HEK293 (cell line): ENCODE measurements at regions of chr1 and their contacts with region 1.

Region 1: GRCh38 chr1:237864338-237865244 is 26.1 kb downstream of the ZP4 start:
- H3K4me3 ChIP-seq: peak overlapping the region; percentile 14
- H3K27ac ChIP-seq: no peak overlapping the region
- H3K4me1 ChIP-seq: no peaks in the 10 kb centered on the region
- CTCF ChIP-seq: peak; percentile 93

Region 2: GRCh38 chr1:237705462-237705861 is 159.1 kb before region 1 on chr1:
- CTCF ChIA-PET with region 1: no interaction called
- POLR2A ChIA-PET with region 1: no interaction called
- H3K4me3 ChIP-seq: no peak overlapping the region
- H3K27ac ChIP-seq: no peak overlapping the region
- H3K4me1 ChIP-seq: no peaks in the 10 kb centered on the region
- CTCF ChIP-seq: no peak

Region 3: GRCh38 chr1:237814319-237814924 is 50.2 kb before region 1 on chr1:
- CTCF ChIA-PET with region 1: interaction called, 10 read pairs
- POLR2A ChIA-PET with region 1: no interaction called
- H3K4me3 ChIP-seq: no peak overlapping the region
- H3K27ac ChIP-seq: no peak overlapping the region
- H3K4me1 ChIP-seq: no peaks in the 10 kb centered on the region
- CTCF ChIP-seq: 0 out of 2 replicates have a peak, but pooled peaks have one; percentile 13

Region 4: DNA sequence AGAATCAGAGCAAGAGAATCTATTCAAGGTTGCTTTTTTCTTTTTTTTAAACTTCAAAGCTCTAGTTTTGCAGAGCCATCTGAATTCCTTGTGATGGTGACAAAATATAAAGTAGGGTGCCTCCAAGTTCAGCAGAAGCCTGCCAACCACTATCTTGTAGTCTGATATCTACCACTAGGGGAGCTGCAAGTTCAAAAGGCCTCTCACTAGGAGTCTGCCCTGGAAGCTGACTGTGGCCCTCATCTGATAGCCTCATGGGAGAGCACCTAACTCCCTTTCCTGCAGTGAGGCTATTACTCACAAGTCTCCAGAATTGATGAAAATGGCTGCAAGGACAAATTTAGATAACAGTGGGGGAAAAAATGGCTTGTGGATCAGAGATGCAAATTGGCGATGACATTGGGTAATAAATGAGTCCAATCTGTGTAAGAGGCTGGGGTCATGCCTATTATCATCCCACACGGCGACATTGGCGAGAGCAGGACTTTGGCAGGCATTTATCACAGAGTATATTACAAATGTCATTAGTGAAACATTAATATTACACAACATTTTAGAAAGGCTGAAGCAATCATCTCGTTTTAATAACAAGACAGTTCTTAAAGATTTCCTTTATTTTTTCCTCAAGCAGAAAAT is 36.8 kb after region 1 on chr1:
- CTCF ChIA-PET with region 1: interaction called, 24 read pairs
- POLR2A ChIA-PET with region 1: no interaction called
- H3K4me3 ChIP-seq: no peak overlapping the region
- H3K27ac ChIP-seq: no peak overlapping the region
- H3K4me1 ChIP-seq: no peaks in the 10 kb centered on the region
- CTCF ChIP-seq: no peak

Region 5: GRCh38 chr1:237927198-237927597 is 62.6 kb after region 1 on chr1:
- CTCF ChIA-PET with region 1: interaction called, 15 read pairs
- POLR2A ChIA-PET with region 1: no interaction called
- H3K4me3 ChIP-seq: no peak overlapping the region
- H3K27ac ChIP-seq: no peak overlapping the region
- H3K4me1 ChIP-seq: no peaks in the 10 kb centered on the region
- CTCF ChIP-seq: no peak

Region 6: DNA sequence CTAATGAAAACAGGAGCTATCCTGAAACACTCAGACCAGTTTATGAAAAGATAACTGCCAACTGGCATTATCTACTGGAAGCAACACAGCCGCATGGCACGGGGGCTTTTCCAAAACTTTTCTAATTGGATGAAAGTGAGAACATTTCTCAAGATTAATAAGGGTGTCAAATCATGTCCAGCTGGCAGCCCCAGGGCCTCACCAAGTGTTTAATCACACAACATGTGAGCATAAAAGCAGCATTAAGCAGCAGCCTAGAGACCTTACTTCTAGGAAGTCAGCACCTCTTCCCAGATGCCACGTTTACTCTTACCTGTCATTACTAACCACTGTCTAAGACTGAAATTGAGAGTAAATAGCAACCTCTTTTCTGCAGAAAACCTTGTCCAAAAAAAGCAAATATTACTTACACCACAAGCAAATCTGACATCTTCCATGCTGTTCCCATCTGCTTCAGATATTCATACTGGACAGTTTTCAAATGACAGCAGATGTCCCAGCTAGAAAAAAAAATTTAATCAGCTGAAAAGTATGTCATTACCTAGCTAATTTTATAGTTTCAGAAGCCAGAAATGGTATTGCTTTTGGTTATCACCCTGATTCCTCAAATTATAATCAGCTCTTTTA is 367.6 kb after region 1 on chr1:
- CTCF ChIA-PET with region 1: interaction called, 10 read pairs
- POLR2A ChIA-PET with region 1: no interaction called
- H3K4me3 ChIP-seq: no peak overlapping the region
- H3K27ac ChIP-seq: no peak overlapping the region
- H3K4me1 ChIP-seq: no peaks in the 10 kb centered on the region
- CTCF ChIP-seq: no peak